H1 (cell line): ENCODE measurements at regions of chr1 and their contacts with region 1.

Region 1: GRCh38 chr1:31715087-31715872 is 11.5 kb upstream of the COL16A1 start:
- DNase-seq: peak; percentile 94 to 95
- H3K4me3 ChIP-seq: peak overlapping the region; percentile 30 to 67 (median 58); a peak in 7 of 8 replicates
- H3K27ac ChIP-seq: no peak overlapping the region; the same call in 1 of the 2 replicates
- H3K4me1 ChIP-seq: peaks cover 0 to 5% (median 3%) of the 10 kb centered on the region in 4 experiments; a peak in 4 of 7 replicates
- H3K27me3 ChIP-seq: no peaks in the 10 kb centered on the region; a peak in 1 of 7 replicates
- CTCF ChIP-seq: peak; percentile 82 to 92 (median 89)
- EP300 ChIP-seq: no peak
- POLR2A ChIP-seq: 0 out of 3 replicates have a peak, but pooled peaks of 1 of the 2 experiments have one; percentile 8
- RAD21 ChIP-seq: peak; percentile 47 to 57

Region 2: GRCh38 chr1:31605908-31606427 is 109.3 kb before region 1 on chr1:
- CTCF ChIA-PET with region 1: no interaction called
- POLR2A ChIA-PET with region 1: no interaction called
- DNase-seq: no peak
- H3K4me3 ChIP-seq: no peak overlapping the region
- H3K27ac ChIP-seq: no peak overlapping the region
- H3K4me1 ChIP-seq: no peaks in the 10 kb centered on the region
- H3K27me3 ChIP-seq: no peaks in the 10 kb centered on the region
- CTCF ChIP-seq: no peak
- EP300 ChIP-seq: no peak
- POLR2A ChIP-seq: no peak
- RAD21 ChIP-seq: no peak

Region 3: GRCh38 chr1:31663622-31664452 is 51.4 kb before region 1 on chr1:
- CTCF ChIA-PET with region 1: interaction called, 181 read pairs
- POLR2A ChIA-PET with region 1: no interaction called
- DNase-seq: peak; percentile 25 to 98
- H3K4me3 ChIP-seq: no peak overlapping the region
- H3K27ac ChIP-seq: no peak overlapping the region
- H3K4me1 ChIP-seq: peaks cover 0 to 3% (median 0%) of the 10 kb centered on the region in 4 experiments; a peak in 3 of 7 replicates
- H3K27me3 ChIP-seq: no peaks in the 10 kb centered on the region
- CTCF ChIP-seq: peak in 2 of 3 experiments; percentile 93 to 96; a peak in 3 of 4 replicates
- EP300 ChIP-seq: no peak
- POLR2A ChIP-seq: no peak
- RAD21 ChIP-seq: peak; percentile 96 to 98

Region 4: DNA sequence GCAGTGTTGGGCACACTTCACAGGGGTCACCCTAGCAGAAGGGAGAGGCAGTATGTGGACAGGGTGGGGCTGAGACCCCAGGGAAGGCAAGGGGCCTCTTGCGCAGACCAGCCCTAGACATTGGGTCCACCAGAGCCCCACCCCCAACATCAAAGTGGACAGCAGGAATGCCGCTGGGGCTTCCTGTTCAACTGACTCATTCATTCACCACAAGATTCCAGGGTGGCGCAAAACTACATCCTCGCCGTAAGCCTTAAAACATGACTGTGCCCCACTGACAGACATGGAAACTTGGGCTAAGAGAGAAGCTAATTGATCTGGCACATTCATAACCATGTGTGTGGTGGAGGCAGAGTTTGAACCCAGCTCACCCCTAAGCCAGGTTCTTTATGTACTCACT is 25.5 kb before region 1 on chr1:
- CTCF ChIA-PET with region 1: interaction called, 31 read pairs
- POLR2A ChIA-PET with region 1: interaction called, 3 read pairs
- DNase-seq: no peak
- H3K4me3 ChIP-seq: no peak overlapping the region
- H3K27ac ChIP-seq: no peak overlapping the region
- H3K4me1 ChIP-seq: peaks cover 0 to 4% (median 0%) of the 10 kb centered on the region in 4 experiments; a peak in 3 of 7 replicates
- H3K27me3 ChIP-seq: no peaks in the 10 kb centered on the region
- CTCF ChIP-seq: no peak
- EP300 ChIP-seq: no peak
- POLR2A ChIP-seq: no peak
- RAD21 ChIP-seq: no peak

Region 5: DNA sequence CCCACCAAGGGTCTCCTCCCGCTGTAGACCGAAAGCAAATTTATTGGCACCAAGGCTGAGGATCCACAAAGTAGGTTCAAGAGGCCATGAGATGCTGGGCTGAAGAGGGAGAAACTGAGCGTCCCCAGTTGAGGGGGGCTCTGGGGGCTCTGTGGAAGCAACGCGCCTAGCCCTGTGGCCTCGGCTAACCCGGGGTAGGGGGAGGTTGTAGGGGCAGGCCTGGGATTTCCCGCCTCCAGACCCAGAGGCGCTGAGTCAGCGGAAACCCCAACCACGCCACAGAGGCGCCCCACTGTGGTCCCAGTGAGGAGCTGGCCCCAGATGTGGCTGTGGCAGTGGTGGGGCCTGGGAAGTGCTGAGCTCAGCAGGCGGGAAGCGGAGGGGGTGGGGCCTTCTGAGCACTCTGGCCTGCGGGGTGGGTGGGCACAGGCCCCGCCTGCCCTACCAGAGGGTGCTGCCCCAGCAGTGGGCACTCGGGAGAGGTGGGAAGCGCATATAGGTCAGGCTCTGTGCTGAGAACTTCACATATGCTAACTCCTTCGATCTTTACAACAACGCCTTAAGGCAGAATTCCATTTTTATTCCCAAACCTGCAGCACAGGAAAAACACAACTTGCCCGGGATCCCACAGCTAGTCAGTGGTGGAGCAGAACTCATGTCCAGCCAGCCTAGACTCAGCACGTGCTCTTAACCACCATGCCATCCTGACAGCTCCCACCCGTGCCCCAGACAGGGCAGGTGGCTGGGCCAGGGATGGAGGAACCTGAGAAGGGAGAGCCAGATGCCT is 10.0 kb before region 1 on chr1:
- CTCF ChIA-PET with region 1: interaction called, 108 read pairs
- POLR2A ChIA-PET with region 1: interaction called, 43 read pairs
- DNase-seq: peak in 1 of 2 experiments; percentile 80
- H3K4me3 ChIP-seq: peak overlapping the region in 3 of 4 experiments; percentile 15 to 69 (median 17); a peak in 5 of 8 replicates
- H3K27ac ChIP-seq: no peak overlapping the region; the same call in 1 of the 2 replicates
- H3K4me1 ChIP-seq: peaks cover 15 to 35% (median 16%) of the 10 kb centered on the region in 4 experiments
- H3K27me3 ChIP-seq: no peaks in the 10 kb centered on the region; a peak in 1 of 7 replicates
- CTCF ChIP-seq: peak in 2 of 3 experiments; percentile 6 to 24; a peak in 2 of 4 replicates
- EP300 ChIP-seq: no peak
- POLR2A ChIP-seq: no peak
- RAD21 ChIP-seq: peak; percentile 32 to 47; a peak in 3 of 4 replicates

Region 6: DNA sequence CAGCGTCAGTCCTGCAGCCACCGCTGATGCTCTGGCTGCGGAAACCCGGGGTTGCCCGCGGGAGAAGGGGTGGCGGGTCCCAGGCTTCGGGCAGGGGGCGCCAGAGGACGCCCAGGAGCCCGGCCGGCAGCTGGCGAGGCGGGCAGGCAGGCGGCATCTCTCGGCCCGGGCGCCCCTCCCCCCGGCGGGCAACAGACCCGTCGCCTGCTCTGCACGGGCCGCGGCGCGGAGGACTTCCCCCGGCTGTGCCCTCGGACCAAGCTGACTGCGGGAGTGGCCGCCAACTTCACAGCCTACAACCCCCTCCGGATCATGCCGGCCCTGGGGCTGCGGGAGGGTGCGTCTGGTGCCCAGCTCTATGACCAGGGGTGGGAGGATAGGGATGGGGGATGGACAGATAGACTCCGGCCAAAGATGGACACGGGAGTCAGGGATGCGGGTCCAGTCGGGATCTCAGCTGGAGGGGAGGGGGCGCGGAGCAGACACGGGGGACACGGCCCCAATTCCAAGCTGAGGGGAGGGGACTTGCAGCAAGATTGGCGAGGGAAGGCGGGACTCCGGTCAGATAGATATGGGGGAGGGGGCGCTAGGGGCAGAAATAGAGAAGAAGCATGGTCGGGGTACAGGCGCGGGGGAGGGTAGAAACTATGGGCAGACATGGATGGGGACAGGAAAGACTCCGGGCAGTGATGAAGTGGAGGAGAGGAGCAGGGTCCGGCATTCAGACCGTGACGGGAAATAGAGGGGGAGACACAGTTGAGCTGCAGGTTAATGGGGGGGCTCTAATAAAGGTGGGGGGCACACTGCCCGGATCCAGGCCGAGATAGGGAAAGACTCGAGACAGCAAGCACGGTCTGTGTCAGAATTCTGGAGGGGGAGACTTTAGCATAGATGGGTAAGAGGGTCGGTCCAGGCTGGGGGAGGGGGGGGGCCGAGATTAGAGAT is 47.7 kb after region 1 on chr1:
- CTCF ChIA-PET with region 1: interaction called, 26 read pairs
- POLR2A ChIA-PET with region 1: interaction called, 4 read pairs
- DNase-seq: peak in 1 of 2 experiments; percentile 94
- H3K4me3 ChIP-seq: peak overlapping the region; percentile 48 to 75 (median 62)
- H3K27ac ChIP-seq: no peak overlapping the region
- H3K4me1 ChIP-seq: peaks cover 24 to 55% (median 34%) of the 10 kb centered on the region in 4 experiments
- H3K27me3 ChIP-seq: peaks cover 3 to 16% (median 7%) of the 10 kb centered on the region in 4 experiments; a peak in 5 of 7 replicates
- CTCF ChIP-seq: peak in 2 of 3 experiments; percentile 72 to 90; a peak in 3 of 4 replicates
- EP300 ChIP-seq: peak in 1 of 2 experiments; percentile 77; a peak in 1 of 3 replicates
- POLR2A ChIP-seq: no peak
- RAD21 ChIP-seq: peak; percentile 55 to 81